ENCODE measurements at regions of chr19 and their contacts with region 1.

Region 1: DNA sequence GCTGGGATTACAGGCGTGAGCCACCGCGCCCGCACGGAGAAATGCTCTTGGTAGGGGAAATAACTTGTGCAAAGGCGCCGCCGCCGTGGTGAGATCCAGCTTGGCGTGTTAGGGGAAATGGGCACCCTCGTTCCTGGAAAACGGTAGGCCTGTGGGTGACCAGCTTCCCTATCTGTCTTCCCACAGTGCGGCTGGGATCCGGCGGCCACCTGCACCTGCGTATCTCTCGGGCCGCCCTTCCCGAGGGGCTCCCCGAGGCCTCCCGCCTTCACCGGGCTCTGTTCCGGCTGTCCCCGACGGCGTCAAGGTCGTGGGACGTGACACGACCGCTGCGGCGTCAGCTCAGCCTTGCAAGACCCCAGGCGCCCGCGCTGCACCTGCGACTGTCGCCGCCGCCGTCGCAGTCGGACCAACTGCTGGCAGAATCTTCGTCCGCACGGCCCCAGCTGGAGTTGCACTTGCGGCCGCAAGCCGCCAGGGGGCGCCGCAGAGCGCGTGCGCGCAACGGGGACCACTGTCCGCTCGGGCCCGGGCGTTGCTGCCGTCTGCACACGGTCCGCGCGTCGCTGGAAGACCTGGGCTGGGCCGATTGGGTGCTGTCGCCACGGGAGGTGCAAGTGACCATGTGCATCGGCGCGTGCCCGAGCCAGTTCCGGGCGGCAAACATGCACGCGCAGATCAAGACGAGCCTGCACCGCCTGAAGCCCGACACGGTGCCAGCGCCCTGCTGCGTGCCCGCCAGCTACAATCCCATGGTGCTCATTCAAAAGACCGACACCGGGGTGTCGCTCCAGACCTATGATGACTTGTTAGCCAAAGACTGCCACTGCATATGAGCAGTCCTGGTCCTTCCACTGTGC is 2.4 kb downstream of the GDF15 start:
- DNase-seq: peak; percentile 78 to 92 (median 91)
- H3K4me3 ChIP-seq: peak overlapping the region; percentile 25 to 62 (median 43)
- H3K27ac ChIP-seq: peak overlapping the region in 1 of 2 experiments; percentile 74
- H3K4me1 ChIP-seq: peaks cover 0 to 44% (median 33%) of the 10 kb centered on the region in 4 experiments
- H3K27me3 ChIP-seq: peaks cover 0 to 3% (median 0%) of the 10 kb centered on the region in 5 experiments

Region 2: GRCh38 chr19:18349524-18350128 is 38.7 kb before region 1 on chr19:
- CTCF ChIA-PET with region 1: interaction called, 22 read pairs
- POLR2A ChIA-PET with region 1: no interaction called
- DNase-seq: peak; percentile 54 to 79 (median 73)
- H3K4me3 ChIP-seq: no peak overlapping the region
- H3K27ac ChIP-seq: no peak overlapping the region
- H3K4me1 ChIP-seq: no peaks in the 10 kb centered on the region
- H3K27me3 ChIP-seq: no peaks in the 10 kb centered on the region

Region 3: DNA sequence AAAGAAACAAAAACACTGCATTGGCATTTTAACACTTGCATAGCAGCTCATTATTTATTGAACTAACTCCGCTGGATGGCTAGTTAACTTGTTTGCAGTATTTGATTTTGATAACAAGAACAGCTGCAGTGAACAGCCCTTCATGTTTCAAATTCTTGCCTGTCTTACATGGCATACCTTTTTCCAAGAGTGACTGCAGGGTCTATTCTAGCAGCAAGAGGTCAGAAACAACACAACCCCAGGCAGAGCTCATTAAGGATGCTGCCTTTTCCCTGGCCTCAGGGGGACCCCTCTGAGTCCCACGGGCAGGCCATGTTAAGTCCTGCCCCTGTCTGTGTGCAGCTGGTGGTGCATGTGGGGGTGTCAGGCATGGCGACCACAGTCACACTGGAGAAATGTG is 31.3 kb before region 1 on chr19:
- CTCF ChIA-PET with region 1: interaction called, 22 read pairs
- POLR2A ChIA-PET with region 1: no interaction called
- DNase-seq: no peak
- H3K4me3 ChIP-seq: no peak overlapping the region
- H3K27ac ChIP-seq: no peak overlapping the region
- H3K4me1 ChIP-seq: no peaks in the 10 kb centered on the region
- H3K27me3 ChIP-seq: no peaks in the 10 kb centered on the region

Region 4: DNA sequence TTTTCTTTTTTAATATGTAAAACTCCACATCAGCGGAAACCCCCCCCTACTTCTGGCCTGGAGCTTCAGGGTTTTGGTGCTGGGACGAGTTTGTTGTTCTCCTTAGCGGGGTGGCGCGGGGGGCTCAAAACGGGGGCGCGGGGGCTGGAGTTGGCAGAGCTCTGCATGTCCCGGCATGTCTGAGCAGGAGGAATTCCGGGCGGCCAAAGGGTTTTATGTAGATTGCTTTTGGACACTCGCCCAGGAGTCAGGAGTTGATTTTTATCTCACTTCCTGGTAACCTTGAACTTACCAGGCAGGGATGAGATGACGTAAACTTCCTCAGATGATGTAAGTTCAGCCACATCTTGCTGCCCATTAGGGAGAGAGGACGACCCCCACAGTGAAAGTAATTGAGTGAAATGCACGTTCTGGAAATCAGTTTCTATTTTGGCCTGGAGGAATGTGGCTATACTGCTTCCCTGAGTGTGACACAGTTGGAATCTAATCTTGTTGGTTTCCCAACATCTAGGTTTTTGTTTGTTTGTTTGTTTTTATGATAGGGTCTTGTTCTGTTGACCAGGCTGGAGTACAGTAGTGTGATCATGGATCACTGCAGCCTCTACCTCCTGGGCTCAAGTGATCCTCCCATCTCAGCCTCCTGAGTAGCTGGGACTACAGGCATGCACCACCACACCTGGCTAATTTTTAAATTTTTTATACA is 23.4 kb before region 1 on chr19:
- CTCF ChIA-PET with region 1: interaction called, 17 read pairs
- POLR2A ChIA-PET with region 1: no interaction called
- DNase-seq: peak; percentile 82 to 87 (median 85)
- H3K4me3 ChIP-seq: peak overlapping the region in 2 of 7 experiments; percentile 20 to 25
- H3K27ac ChIP-seq: peak overlapping the region in 1 of 2 experiments; percentile 73
- H3K4me1 ChIP-seq: peaks cover 5 to 29% (median 21%) of the 10 kb centered on the region in 4 experiments
- H3K27me3 ChIP-seq: no peaks in the 10 kb centered on the region

Region 5: GRCh38 chr19:18401580-18402112 is 13.3 kb after region 1 on chr19:
- CTCF ChIA-PET with region 1: interaction called, 101 read pairs
- POLR2A ChIA-PET with region 1: interaction called, 3 read pairs
- DNase-seq: peak; percentile 93 to 95 (median 94)
- H3K4me3 ChIP-seq: peak overlapping the region in 1 of 7 experiments; percentile 19
- H3K27ac ChIP-seq: peak overlapping the region in 1 of 2 experiments; percentile 79
- H3K4me1 ChIP-seq: peaks cover 5 to 54% (median 44%) of the 10 kb centered on the region in 4 experiments
- H3K27me3 ChIP-seq: no peaks in the 10 kb centered on the region

Region 6: GRCh38 chr19:18412610-18413239 is 24.4 kb after region 1 on chr19:
- CTCF ChIA-PET with region 1: interaction called, 133 read pairs
- POLR2A ChIA-PET with region 1: interaction called, 7 read pairs
- DNase-seq: no peak
- H3K4me3 ChIP-seq: no peak overlapping the region
- H3K27ac ChIP-seq: no peak overlapping the region
- H3K4me1 ChIP-seq: peaks cover 3 to 50% (median 40%) of the 10 kb centered on the region in 4 experiments
- H3K27me3 ChIP-seq: no peaks in the 10 kb centered on the region

Region 7: GRCh38 chr19:18419195-18419698 is 30.9 kb after region 1 on chr19 and contains the start of gene SSBP4:
- CTCF ChIA-PET with region 1: interaction called, 133 read pairs
- POLR2A ChIA-PET with region 1: interaction called, 7 read pairs
- DNase-seq: peak; percentile 68 to 89 (median 85)
- H3K4me3 ChIP-seq: peak within 1 kb of the TSS; percentile 24 to 77 (median 65)
- H3K27ac ChIP-seq: peak within 1 kb of the TSS in 1 of 2 experiments; percentile 56
- H3K4me1 ChIP-seq: peaks cover 3 to 82% (median 74%) of the 10 kb centered on the region in 4 experiments
- H3K27me3 ChIP-seq: no peaks in the 10 kb centered on the region